GM13976 (cell line): ENCODE measurements at regions of chr21 and their contacts with region 1.

Region 1: GRCh38 chr21:31180256-31181081 is 142.2 kb upstream of the KRTAP19-8 start:
- DNase-seq: peak; percentile 48
- CTCF ChIP-seq: peak; percentile 26

Region 2: GRCh38 chr21:30434033-30434631 is 746.3 kb before region 1 on chr21:
- in situ Hi-C with region 1: no loop called
- DNase-seq: no peak
- CTCF ChIP-seq: no peak

Region 3: DNA sequence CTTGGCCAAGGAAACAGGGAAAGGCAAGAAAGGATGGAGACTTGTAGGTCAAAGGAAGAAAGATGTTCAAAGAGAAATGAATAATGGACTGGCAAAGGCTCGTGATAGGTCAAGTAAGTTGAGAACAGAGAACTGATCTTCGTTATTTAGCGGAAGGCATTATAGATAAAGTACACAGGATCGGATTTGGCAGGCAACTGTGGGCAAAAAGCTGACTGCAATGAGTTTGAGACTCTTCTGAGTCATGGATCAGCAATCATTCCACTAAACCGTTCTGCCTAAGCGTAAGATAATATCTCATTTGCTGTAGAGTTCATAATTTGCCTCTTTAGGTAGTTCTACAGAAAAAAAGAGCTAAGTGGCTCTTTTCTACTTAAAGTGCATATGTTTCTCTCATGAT is 496.0 kb before region 1 on chr21:
- in situ Hi-C with region 1: no loop called
- DNase-seq: no peak
- CTCF ChIP-seq: no peak

Region 4: DNA sequence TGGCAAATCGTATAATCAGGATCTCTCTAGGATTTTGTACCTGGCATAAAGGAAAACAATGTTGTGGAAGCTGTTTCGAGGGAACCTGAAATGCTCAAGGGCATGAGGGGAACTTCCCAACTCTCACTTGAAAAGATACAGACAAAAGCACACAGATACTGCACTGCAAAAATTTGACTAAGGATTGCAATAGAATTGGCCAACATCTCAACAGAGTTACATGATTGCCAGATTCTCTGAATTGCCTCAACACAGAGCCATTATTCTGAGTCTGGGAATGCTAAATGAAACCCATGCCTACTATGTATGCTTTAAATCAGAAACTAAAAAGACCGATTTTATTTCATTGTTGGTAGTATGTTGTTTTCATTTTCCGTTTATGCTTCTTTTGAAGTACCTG is 158.2 kb before region 1 on chr21:
- in situ Hi-C with region 1: no loop called
- DNase-seq: no peak
- CTCF ChIP-seq: no peak

Region 5: DNA sequence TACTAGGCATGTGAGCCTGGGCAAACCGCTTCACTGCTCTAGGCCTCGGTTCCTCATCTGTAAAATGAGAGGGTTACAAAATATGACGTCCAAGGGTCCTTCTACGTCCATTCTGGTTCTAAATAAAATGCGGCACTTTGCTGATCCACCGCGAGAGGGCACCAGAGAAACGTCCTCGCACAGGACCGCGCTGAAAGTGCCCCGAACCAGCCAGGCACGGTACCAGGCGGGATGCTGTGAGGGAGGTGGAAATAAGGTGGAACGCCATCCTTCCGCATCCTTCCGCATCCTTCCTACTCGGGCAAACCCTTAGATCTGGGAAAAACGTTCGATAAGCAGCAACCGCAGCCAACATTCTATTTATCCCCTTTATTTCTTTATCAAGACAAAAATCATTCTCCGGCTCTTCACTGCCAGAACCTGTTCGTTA is 81.9 kb before region 1 on chr21:
- in situ Hi-C with region 1: loop called (anchors 5 kb)
- DNase-seq: peak; percentile 64
- CTCF ChIP-seq: peak; percentile 87